CD4-positive, alpha-beta T cell (primary cell): ENCODE measurements at regions of chr5 and their contacts with region 1.

Region 1: DNA sequence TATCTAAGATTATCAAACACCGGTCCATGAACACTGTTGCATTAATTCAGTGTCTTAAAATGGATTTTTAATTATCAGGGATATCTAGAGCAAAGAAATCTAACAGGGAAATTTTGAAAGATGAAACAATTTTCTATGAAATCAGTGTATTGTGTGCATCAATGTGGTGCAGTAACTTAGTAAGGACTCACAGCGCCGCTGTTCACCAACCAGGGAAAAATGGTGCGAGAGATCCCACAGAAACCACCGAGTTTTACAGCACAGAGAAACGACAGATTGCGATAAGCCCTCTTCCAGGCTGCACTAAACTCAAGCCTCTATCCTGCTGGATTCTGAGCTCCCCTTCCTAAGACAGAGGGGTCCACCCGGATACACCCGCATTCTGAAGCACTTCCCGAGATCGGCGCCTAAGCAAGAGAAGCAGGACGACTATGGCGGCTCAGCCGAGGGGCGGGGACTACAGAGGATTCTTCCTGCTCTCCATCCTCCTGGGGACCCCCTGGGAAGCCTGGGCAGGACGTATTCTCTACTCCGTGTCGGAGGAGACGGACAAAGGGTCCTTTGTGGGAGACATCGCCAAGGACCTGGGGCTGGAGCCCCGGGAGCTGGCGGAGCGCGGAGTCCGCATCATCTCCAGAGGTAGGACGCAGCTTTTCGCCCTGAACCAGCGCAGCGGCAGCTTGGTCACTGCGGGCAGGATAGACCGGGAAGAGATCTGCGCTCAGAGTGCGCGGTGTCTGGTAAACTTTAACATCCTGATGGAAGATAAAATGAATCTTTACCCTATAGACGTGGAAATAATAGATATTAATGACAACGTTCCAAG is at the start of gene PCDHGA7:
- DNase-seq: no peak
- ATAC-seq: no peak
- H3K4me3 ChIP-seq: peak within 1 kb of the TSS; percentile 3
- H3K4me3 Mint-ChIP-seq: peak within 1 kb of the TSS; percentile 36
- H3K27ac ChIP-seq: no peak within 1 kb of the TSS
- H3K27ac Mint-ChIP-seq: no peak within 1 kb of the TSS
- H3K4me1 ChIP-seq: peaks cover 3% of the 10 kb centered on the region
- H3K4me1 Mint-ChIP-seq: no peaks in the 10 kb centered on the region
- H3K27me3 ChIP-seq: peaks cover 52 to 68% of the 10 kb centered on the region in 2 experiments
- H3K27me3 Mint-ChIP-seq: peaks cover 93% of the 10 kb centered on the region
- CTCF ChIP-seq: no peak
- total RNA-seq, gene PCDHGA7: not detected

Region 2: DNA sequence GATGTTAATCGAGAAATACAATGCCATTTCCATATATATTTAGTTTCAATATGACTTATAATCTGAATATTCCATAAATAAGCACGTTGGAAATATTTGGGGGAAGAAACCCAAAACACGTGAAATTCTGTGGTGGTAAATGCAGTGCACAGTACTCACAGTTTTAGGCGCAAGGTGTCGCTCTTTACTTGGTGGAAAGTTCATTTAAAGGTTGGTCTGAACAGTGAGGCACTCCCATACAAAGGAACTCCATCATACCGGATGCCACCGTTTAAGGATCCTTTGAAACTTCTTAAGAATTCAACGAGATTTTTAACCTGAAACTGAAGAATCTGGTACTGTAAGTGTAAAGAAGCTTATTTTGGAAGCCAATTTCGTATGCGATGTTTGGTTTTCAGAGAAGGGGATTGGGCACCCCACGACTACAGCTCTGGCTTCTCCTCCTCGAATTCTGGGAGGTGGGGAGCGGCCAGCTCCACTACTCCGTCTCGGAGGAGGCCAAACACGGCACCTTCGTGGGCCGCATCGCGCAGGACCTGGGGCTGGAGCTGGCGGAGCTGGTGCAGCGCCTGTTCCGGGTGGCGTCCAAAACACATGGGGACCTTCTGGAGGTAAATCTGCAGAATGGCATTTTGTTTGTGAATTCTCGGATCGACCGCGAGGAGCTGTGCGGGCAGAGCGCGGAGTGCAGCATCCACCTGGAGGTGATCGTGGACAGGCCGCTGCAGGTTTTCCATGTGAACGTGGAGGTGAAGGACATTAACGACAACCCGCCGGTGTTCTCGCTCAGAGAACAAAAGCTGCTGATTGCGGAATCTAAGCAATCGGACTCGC is 513.7 kb before region 1 on chr5 and contains the start of gene PCDHA11:
- CTCF ChIA-PET with region 1: no interaction called
- POLR2A ChIA-PET with region 1: no interaction called
- intact Hi-C with region 1: no loop called
- DNase-seq: no peak
- ATAC-seq: no peak
- H3K4me3 ChIP-seq: no peak within 1 kb of the TSS
- H3K4me3 Mint-ChIP-seq: no peak within 1 kb of the TSS
- H3K27ac ChIP-seq: no peak within 1 kb of the TSS
- H3K27ac Mint-ChIP-seq: no peak within 1 kb of the TSS
- H3K4me1 ChIP-seq: no peaks in the 10 kb centered on the region
- H3K4me1 Mint-ChIP-seq: no peaks in the 10 kb centered on the region
- H3K27me3 ChIP-seq: peaks cover 13 to 23% of the 10 kb centered on the region in 2 experiments
- H3K27me3 Mint-ChIP-seq: peaks cover 48% of the 10 kb centered on the region
- CTCF ChIP-seq: no peak
- total RNA-seq, gene PCDHA11: not detected

Region 3: DNA sequence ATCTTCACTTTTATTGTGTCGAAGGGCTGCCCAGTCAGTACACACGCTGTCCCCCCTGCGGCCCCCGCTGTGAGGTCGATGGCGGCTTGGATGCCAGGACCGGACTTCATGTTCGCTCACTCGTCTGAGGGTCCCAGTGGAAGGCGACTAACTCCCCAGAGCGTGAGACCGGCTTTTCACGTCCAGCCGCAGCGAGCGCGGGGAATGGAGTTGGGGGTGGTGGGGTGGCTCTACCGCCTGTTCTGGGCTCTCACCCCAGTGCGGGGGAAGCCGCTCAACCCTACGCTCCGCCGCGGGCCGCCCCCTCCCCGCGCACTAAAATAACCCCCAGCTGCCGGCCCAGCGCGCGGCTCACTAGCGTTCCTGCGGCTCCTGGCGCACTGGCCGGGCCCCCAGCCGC is 78.9 kb before region 1 on chr5 and contains the start of gene SLC25A2:
- CTCF ChIA-PET with region 1: no interaction called
- POLR2A ChIA-PET with region 1: no interaction called
- intact Hi-C with region 1: no loop called
- DNase-seq: peak in 1 of 14 experiments; percentile 6
- ATAC-seq: no peak
- H3K4me3 ChIP-seq: no peak within 1 kb of the TSS
- H3K4me3 Mint-ChIP-seq: no peak within 1 kb of the TSS
- H3K27ac ChIP-seq: no peak within 1 kb of the TSS
- H3K27ac Mint-ChIP-seq: no peak within 1 kb of the TSS
- H3K4me1 ChIP-seq: no peaks in the 10 kb centered on the region
- H3K4me1 Mint-ChIP-seq: no peaks in the 10 kb centered on the region
- H3K27me3 ChIP-seq: no peaks in the 10 kb centered on the region
- H3K27me3 Mint-ChIP-seq: no peaks in the 10 kb centered on the region
- CTCF ChIP-seq: no peak
- total RNA-seq, gene SLC25A2: 0.22 TPM in 1 of 2 experiments, not detected in the other

Region 4: DNA sequence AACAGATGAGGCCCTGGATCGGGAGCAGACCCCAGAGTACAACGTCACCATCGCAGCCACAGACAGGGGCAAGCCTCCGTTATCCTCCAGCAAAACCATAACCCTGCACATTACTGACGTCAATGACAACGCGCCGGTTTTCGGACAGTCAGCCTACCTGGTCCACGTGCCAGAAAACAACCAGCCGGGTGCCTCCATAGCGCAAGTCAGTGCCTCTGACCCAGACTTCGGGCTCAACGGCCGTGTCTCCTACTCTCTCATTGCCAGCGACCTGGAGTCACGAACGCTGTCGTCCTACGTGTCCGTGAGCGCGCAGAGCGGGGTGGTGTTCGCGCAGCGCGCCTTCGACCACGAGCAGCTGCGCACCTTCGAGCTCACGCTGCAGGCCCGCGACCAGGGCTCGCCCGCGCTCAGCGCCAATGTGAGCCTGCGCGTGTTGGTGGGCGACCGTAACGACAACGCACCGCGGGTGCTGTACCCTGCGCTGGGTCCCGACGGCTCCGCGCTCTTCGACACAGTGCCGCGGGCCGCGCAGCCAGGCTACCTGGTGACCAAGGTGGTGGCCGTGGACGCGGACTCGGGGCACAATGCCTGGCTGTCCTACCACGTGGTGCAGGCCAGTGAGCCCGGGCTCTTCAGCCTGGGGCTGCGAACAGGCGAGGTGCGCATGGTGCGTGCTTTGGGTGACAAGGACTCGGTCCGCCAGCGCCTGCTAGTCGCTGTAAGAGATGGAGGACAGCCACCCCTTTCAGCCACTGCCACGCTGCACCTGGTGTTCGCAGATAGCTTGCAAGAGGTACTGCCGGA is 36.6 kb after region 1 on chr5:
- CTCF ChIA-PET with region 1: no interaction called
- POLR2A ChIA-PET with region 1: no interaction called
- intact Hi-C with region 1: loop called in 1 of 2 experiments (anchors 5 kb)
- DNase-seq: no peak
- ATAC-seq: no peak
- H3K4me3 ChIP-seq: no peak overlapping the region
- H3K4me3 Mint-ChIP-seq: no peak overlapping the region
- H3K27ac ChIP-seq: no peak overlapping the region
- H3K27ac Mint-ChIP-seq: peak overlapping the region; percentile 41
- H3K4me1 ChIP-seq: peaks cover 11% of the 10 kb centered on the region
- H3K4me1 Mint-ChIP-seq: peaks cover 10% of the 10 kb centered on the region
- H3K27me3 ChIP-seq: peaks cover 60 to 90% of the 10 kb centered on the region in 2 experiments
- H3K27me3 Mint-ChIP-seq: peaks cover 89% of the 10 kb centered on the region
- CTCF ChIP-seq: no peak

Region 5: GRCh38 chr5:141605523-141606277 is 223.0 kb after region 1 on chr5:
- CTCF ChIA-PET with region 1: no interaction called
- POLR2A ChIA-PET with region 1: no interaction called
- intact Hi-C with region 1: no loop called
- DNase-seq: peak; percentile 43 to 95 (median 64)
- ATAC-seq: peak; percentile 92
- H3K4me3 ChIP-seq: peak overlapping the region; percentile 14
- H3K4me3 Mint-ChIP-seq: peak overlapping the region; percentile 73
- H3K27ac ChIP-seq: peak overlapping the region; percentile 75 to 84
- H3K27ac Mint-ChIP-seq: peak overlapping the region; percentile 91
- H3K4me1 ChIP-seq: peaks cover 71% of the 10 kb centered on the region
- H3K4me1 Mint-ChIP-seq: peaks cover 85% of the 10 kb centered on the region
- H3K27me3 ChIP-seq: no peaks in the 10 kb centered on the region
- H3K27me3 Mint-ChIP-seq: no peaks in the 10 kb centered on the region
- CTCF ChIP-seq: no peak